Heart left ventricle (tissue), 16 donors: ENCODE measurements at regions of chr9 and their contacts with region 1.

Region 1: GRCh38 chr9:135992486-135993408 is 31.6 kb upstream of the UBAC1 start:
- DNase-seq: peak; percentile 89 to 93 (median 90)
- ATAC-seq: peak; percentile 80 to 95 (median 90)
- H3K4me3 ChIP-seq: peak overlapping the region in 10 of 12 donors; percentile 1 to 55 (median 38)
- H3K27ac ChIP-seq: peak overlapping the region; percentile 75 to 98 (median 90)
- H3K4me1 ChIP-seq: peaks cover 10 to 64% (median 32%) of the 10 kb centered on the region in 12 donors
- H3K27me3 ChIP-seq: no peaks in the 10 kb centered on the region
- CTCF ChIP-seq: peak in 1 of 12 donors; percentile 12
- POLR2A ChIP-seq: no peak

Region 2: GRCh38 chr9:136045971-136046920 is 53.5 kb after region 1 on chr9:
- intact Hi-C with region 1: loop called in 1 of 10 experiments (anchors 10 kb)
- DNase-seq: peak in 2 of 5 donors; percentile 51 to 76
- ATAC-seq: peak in 2 of 4 donors; percentile 3 to 40
- H3K4me3 ChIP-seq: peak overlapping the region in 1 of 12 donors; percentile 25
- H3K27ac ChIP-seq: peak overlapping the region in 1 of 12 donors; percentile 57
- H3K4me1 ChIP-seq: peaks cover 0 to 72% (median 23%) of the 10 kb centered on the region in 12 donors
- H3K27me3 ChIP-seq: no peaks in the 10 kb centered on the region
- CTCF ChIP-seq: no peak
- POLR2A ChIP-seq: no peak